Esophagus muscularis mucosa (tissue), 4 donors: ENCODE measurements at regions of chr5 and their contacts with region 1.

Region 1: GRCh38 chr5:42583322-42583721 is 160.1 kb downstream of the GHR start:
- DNase-seq: no peak
- H3K4me3 ChIP-seq: no peak overlapping the region
- H3K27ac ChIP-seq: no peak overlapping the region
- H3K4me1 ChIP-seq: peaks cover 20 to 31% (median 26%) of the 10 kb centered on the region in 4 donors
- H3K27me3 ChIP-seq: no peaks in the 10 kb centered on the region
- CTCF ChIP-seq: peak; percentile 77 to 89 (median 82)
- EP300 ChIP-seq: no peak
- POLR2A ChIP-seq: no peak

Region 2: GRCh38 chr5:42423285-42424165 is 159.8 kb before region 1 on chr5 and contains the start of gene GHR:
- intact Hi-C with region 1: loop called (anchors 2 kb)
- DNase-seq: peak; percentile 94
- H3K4me3 ChIP-seq: peak within 1 kb of the TSS; percentile 75 to 87 (median 79)
- H3K27ac ChIP-seq: peak within 1 kb of the TSS; percentile 83 to 90 (median 84)
- H3K4me1 ChIP-seq: peaks cover 11 to 35% (median 33%) of the 10 kb centered on the region in 4 donors
- H3K27me3 ChIP-seq: no peaks in the 10 kb centered on the region
- CTCF ChIP-seq: peak; percentile 72 to 87 (median 76)
- EP300 ChIP-seq: no peak
- POLR2A ChIP-seq: no peak
- total RNA-seq, gene GHR: 5.3 to 9.1 (median 6.5) TPM

Region 3: GRCh38 chr5:42632354-42632900 is 49.1 kb after region 1 on chr5:
- intact Hi-C with region 1: no loop called
- DNase-seq: no peak
- H3K4me3 ChIP-seq: no peak overlapping the region
- H3K27ac ChIP-seq: no peak overlapping the region
- H3K4me1 ChIP-seq: no peaks in the 10 kb centered on the region
- H3K27me3 ChIP-seq: no peaks in the 10 kb centered on the region
- CTCF ChIP-seq: no peak
- EP300 ChIP-seq: no peak
- POLR2A ChIP-seq: no peak

Region 4: GRCh38 chr5:42908509-42909488 is 325.5 kb after region 1 on chr5:
- intact Hi-C with region 1: no loop called
- DNase-seq: peak; percentile 93
- H3K4me3 ChIP-seq: peak overlapping the region; percentile 52 to 57 (median 54)
- H3K27ac ChIP-seq: no peak overlapping the region
- H3K4me1 ChIP-seq: peaks cover 4 to 11% (median 8%) of the 10 kb centered on the region in 4 donors
- H3K27me3 ChIP-seq: peaks cover 0 to 16% (median 0%) of the 10 kb centered on the region in 4 donors
- CTCF ChIP-seq: peak; percentile 77 to 87 (median 81)
- EP300 ChIP-seq: no peak
- POLR2A ChIP-seq: no peak